Calu3 (cell line): ENCODE measurements at regions of chr4 and their contacts with region 1.

Region 1: GRCh38 chr4:72295966-72296557 is 264.3 kb downstream of the NPFFR2 start:
- DNase-seq: no peak
- H3K4me3 Mint-ChIP-seq: no peak overlapping the region
- H3K27ac Mint-ChIP-seq: no peak overlapping the region
- H3K4me1 Mint-ChIP-seq: peaks cover 8% of the 10 kb centered on the region
- H3K27me3 Mint-ChIP-seq: no peaks in the 10 kb centered on the region
- CTCF ChIP-seq: no peak

Region 2: GRCh38 chr4:72468904-72469502 is 172.9 kb after region 1 on chr4:
- CTCF ChIA-PET with region 1: no interaction called
- intact Hi-C with region 1: loop called (anchors 1 kb)
- DNase-seq: no peak
- H3K4me3 Mint-ChIP-seq: no peak overlapping the region
- H3K27ac Mint-ChIP-seq: peak overlapping the region; percentile 65
- H3K4me1 Mint-ChIP-seq: no peaks in the 10 kb centered on the region
- H3K27me3 Mint-ChIP-seq: no peaks in the 10 kb centered on the region
- CTCF ChIP-seq: peak; percentile 20

Region 3: DNA sequence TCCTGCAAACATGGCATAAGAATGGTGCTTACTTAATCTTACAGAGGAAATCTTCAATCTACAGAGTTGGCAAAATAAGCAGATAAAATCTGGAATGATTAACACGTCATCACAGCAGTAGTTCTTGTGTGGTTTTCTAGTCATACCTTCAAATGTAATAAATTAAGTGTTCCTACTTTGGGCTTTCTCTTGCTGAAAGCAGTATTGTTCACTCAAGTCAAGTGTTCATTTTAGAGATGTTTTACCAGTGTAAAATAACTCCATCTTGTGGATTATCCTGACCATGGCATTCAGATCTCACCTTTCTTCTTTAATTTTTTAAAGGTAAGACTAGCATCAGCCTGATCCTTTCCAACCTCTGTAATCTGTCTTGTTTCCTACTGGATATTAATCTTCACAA is 200.1 kb after region 1 on chr4:
- CTCF ChIA-PET with region 1: no interaction called
- intact Hi-C with region 1: loop called (anchors 1 kb)
- DNase-seq: no peak
- H3K4me3 Mint-ChIP-seq: no peak overlapping the region
- H3K27ac Mint-ChIP-seq: no peak overlapping the region
- H3K4me1 Mint-ChIP-seq: no peaks in the 10 kb centered on the region
- H3K27me3 Mint-ChIP-seq: no peaks in the 10 kb centered on the region
- CTCF ChIP-seq: no peak

Region 4: GRCh38 chr4:72701987-72702819 is 406.1 kb after region 1 on chr4:
- CTCF ChIA-PET with region 1: no interaction called
- intact Hi-C with region 1: loop called (anchors 10 kb)
- DNase-seq: peak; percentile 28
- H3K4me3 Mint-ChIP-seq: peak overlapping the region; percentile 50
- H3K27ac Mint-ChIP-seq: no peak overlapping the region
- H3K4me1 Mint-ChIP-seq: no peaks in the 10 kb centered on the region
- H3K27me3 Mint-ChIP-seq: peaks cover 3% of the 10 kb centered on the region
- CTCF ChIP-seq: no peak